ENCODE measurements at regions of chr5 and their contacts with region 1.

Region 1: GRCh38 chr5:74640450-74640953 is at the start of gene ENC1:
- DNase-seq: no peak
- H3K4me3 ChIP-seq: peak within 1 kb of the TSS; percentile 96
- CTCF ChIP-seq: peak; percentile 79

Region 2: GRCh38 chr5:73902327-73903051 is 738.0 kb before region 1 on chr5:
- CTCF ChIA-PET with region 1: interaction called, 143 read pairs
- POLR2A ChIA-PET with region 1: interaction called, 4 read pairs
- DNase-seq: peak; percentile 28
- H3K4me3 ChIP-seq: no peak overlapping the region
- CTCF ChIP-seq: peak; percentile 45

Region 3: DNA sequence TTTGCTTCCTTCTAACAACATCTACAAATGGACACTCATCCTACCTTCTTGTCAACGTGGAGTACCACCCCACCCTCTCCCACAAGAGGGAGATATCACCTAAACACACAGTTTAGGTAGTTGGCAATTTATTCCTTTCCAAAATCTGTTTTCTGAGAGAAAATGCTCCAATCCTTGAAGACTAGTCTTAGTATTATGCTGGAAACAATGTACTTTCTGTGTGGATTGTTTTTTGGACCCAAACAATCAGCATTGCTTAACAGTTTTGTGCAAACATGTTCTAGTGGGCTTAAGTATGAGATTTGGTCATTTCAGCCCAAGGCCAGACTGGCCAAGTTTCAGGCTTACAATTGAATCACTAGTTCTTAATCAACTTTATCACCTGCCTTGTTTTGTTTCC is 655.4 kb before region 1 on chr5:
- CTCF ChIA-PET with region 1: interaction called, 15 read pairs
- POLR2A ChIA-PET with region 1: no interaction called
- DNase-seq: no peak
- H3K4me3 ChIP-seq: no peak overlapping the region
- CTCF ChIP-seq: peak; percentile 35

Region 4: GRCh38 chr5:74212336-74212735 is 428.2 kb before region 1 on chr5:
- CTCF ChIA-PET with region 1: interaction called, 15 read pairs
- POLR2A ChIA-PET with region 1: interaction called, 4 read pairs
- DNase-seq: no peak
- H3K4me3 ChIP-seq: no peak overlapping the region
- CTCF ChIP-seq: peak; percentile 31

Region 5: DNA sequence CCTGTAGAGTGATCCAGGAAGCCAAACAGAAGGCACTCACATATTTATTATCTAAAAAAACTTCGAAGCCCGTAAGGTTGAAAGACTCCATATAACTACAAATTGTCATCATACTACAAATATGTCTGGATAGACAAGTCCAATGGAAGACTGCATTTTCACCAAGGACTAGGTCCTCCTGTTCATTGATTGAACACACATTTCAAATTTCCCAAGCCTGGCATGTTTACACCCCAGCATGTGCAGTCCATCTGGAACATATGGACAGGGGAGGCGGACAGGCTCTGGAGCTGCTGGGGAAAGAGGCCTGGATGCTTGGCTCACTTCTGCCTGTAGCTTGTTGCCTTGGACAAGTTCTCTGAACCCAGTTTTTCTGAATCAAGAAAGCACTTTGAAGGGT is 378.6 kb before region 1 on chr5:
- CTCF ChIA-PET with region 1: interaction called, 11 read pairs
- POLR2A ChIA-PET with region 1: no interaction called
- DNase-seq: no peak
- H3K4me3 ChIP-seq: no peak overlapping the region
- CTCF ChIP-seq: no peak

Region 6: DNA sequence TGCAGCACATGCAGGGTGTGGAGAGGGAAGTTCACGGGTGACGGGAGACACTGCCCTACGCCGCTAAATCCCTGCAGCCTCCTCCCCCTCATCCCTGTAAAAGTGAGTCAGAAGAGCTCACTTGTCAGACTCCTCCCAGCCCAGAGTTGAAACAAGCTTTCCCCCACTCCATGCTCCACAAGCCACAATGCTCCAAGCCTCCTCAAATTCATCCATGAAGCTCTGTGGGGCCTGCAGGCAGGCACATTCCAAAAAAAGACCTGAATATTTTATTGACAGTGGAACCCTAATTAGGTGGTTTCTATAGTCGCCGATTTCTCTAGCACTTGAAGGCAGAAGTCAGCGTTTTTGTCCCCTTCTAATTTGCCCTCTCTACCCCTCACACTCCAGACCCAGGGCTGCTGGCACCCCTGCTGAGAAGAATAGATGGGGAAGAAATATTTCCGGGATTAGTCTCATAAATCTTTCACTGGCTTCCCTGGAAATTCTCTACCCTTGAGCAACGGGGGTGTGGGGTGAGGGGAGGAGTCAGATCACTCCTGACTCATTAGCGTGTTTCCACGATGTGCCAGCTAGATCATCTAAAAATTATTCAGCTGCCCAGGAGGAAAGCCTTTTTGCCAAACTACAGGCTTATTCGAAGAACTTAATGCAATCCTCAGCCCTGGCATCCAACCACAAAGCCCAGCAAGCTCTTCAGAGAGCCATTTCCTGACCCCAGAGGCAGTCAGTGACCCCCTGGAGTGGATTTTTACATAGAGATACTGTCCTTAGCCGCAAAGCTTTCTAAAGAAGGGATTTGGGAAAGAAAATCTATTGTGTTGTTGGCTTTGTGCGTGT is 97.1 kb before region 1 on chr5:
- CTCF ChIA-PET with region 1: no interaction called
- POLR2A ChIA-PET with region 1: interaction called, 30 read pairs
- DNase-seq: peak; percentile 79
- H3K4me3 ChIP-seq: peak overlapping the region; percentile 32
- CTCF ChIP-seq: no peak

Region 7: GRCh38 chr5:74556631-74557595 is 83.6 kb before region 1 on chr5:
- CTCF ChIA-PET with region 1: no interaction called
- POLR2A ChIA-PET with region 1: no interaction called
- DNase-seq: no peak
- H3K4me3 ChIP-seq: no peak overlapping the region
- CTCF ChIP-seq: no peak

Region 8: DNA sequence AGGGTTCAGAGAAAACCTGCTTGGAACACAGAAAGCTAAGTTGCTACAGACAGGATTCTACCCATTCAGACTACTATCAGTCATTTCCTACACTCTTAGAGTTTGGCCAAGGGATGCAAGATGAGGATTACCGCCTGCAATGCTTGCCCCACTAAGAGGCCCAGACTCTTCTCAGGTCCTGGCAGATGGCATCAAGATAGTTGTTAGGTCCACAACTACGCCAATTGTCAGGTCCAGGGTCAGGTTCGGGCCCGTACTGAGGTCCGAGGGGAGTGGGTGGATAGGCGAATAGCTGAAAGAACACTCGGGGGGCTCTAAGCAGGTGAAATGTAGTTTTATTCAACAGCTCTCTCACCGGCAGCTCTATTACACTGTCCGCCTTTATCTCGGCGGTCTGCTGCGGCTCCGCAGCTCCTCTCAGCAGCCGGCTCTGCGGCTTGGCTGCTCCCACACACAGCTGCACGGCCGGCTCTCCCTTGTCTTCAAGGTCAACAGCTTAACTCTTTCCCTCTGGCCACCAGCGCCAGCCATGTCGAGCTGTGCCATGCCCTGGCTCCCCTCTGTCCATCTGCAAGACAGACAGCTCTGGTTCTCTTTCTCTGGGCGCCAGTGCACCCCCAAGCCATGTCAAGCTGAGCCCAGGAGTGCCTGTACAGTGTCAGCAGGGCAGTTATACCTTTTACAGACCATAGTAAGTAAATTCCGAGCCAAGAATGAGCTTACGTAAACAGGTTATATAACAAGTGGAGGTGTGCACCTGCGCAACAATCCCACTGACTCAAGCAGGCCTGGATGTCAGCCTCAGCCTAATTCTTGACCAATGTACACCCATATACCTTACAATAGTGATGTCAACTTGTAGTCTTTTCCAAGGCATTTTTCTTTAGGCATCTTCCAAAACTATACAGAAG is 24.0 kb before region 1 on chr5:
- CTCF ChIA-PET with region 1: no interaction called
- POLR2A ChIA-PET with region 1: no interaction called
- DNase-seq: no peak
- H3K4me3 ChIP-seq: no peak overlapping the region
- CTCF ChIP-seq: no peak

Region 9: DNA sequence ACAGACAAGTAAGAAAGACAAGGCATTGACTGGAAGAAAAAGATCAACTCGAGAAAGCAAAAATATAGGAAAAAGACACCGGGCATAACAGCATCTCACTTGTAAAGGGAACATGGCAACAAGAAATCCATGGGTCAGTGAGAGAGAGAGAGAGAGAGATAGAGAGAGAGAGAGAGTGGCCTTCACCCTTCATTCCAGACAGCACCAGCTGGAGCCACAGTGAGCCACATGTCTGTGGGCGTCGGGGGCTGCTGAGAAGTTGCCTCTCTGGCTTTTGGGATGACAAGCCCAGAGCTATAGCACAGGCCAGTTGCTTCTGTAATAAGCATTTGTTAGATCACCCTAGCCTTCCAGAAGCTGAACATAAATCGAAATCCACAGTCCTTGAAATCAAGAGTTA is 20.4 kb after region 1 on chr5:
- CTCF ChIA-PET with region 1: no interaction called
- POLR2A ChIA-PET with region 1: no interaction called
- DNase-seq: no peak
- H3K4me3 ChIP-seq: no peak overlapping the region
- CTCF ChIP-seq: no peak

Measured in AG04449 (cell line).